Activated CD4-positive, alpha-beta memory T cell treated with anti-CD3 and anti-CD28 coated beads for 36 hours (primary cell): ENCODE measurements at regions of chr6 and their contacts with region 1.

Region 1: GRCh38 chr6:127516666-127517273 is 2.4 kb downstream of the MTCL3 start:
- DNase-seq: peak; percentile 72
- H3K4me3 Mint-ChIP-seq: peak overlapping the region; percentile 85
- H3K27ac Mint-ChIP-seq: peak overlapping the region; percentile 34
- H3K4me1 Mint-ChIP-seq: peaks cover 32% of the 10 kb centered on the region
- H3K27me3 Mint-ChIP-seq: peaks cover 15% of the 10 kb centered on the region

Region 2: GRCh38 chr6:127291495-127291894 is 225.3 kb before region 1 on chr6:
- CTCF ChIA-PET with region 1: interaction called, 9 read pairs
- POLR2A ChIA-PET with region 1: no interaction called
- intact Hi-C with region 1: loop called (anchors 2 kb)
- DNase-seq: no peak
- H3K4me3 Mint-ChIP-seq: no peak overlapping the region
- H3K27ac Mint-ChIP-seq: peak overlapping the region; percentile 49
- H3K4me1 Mint-ChIP-seq: peaks cover 45% of the 10 kb centered on the region
- H3K27me3 Mint-ChIP-seq: no peaks in the 10 kb centered on the region

Region 3: DNA sequence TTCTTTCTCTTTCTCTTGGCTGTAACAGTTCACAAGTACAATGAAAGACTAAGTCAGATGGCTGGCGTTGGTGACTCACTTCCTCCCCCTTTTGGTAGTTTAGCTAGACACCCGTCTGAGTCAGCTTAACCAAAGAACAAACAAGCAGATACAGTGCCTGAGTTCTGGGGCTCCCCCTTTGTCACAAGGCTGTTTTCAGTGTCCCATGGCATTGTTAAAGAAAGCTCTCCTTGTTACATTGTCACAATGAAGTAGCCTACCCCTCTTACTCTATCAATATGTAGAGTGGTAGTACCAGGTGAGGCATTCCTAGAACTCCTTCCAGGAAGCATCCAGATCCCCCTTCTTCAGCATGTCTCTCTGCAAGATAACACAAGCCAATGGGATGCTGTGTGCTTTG is 96.2 kb before region 1 on chr6:
- CTCF ChIA-PET with region 1: interaction called, 9 read pairs
- POLR2A ChIA-PET with region 1: interaction called, 3 read pairs
- intact Hi-C with region 1: loop called (anchors 1 kb)
- DNase-seq: peak; percentile 89
- H3K4me3 Mint-ChIP-seq: no peak overlapping the region
- H3K27ac Mint-ChIP-seq: peak overlapping the region; percentile 64
- H3K4me1 Mint-ChIP-seq: peaks cover 19% of the 10 kb centered on the region
- H3K27me3 Mint-ChIP-seq: peaks cover 1% of the 10 kb centered on the region

Region 4: GRCh38 chr6:127484212-127484858 is 32.4 kb before region 1 on chr6:
- CTCF ChIA-PET with region 1: interaction called, 163 read pairs
- POLR2A ChIA-PET with region 1: interaction called, 21 read pairs
- intact Hi-C with region 1: loop called (anchors 1 kb)
- DNase-seq: no peak
- H3K4me3 Mint-ChIP-seq: no peak overlapping the region
- H3K27ac Mint-ChIP-seq: peak overlapping the region; percentile 68
- H3K4me1 Mint-ChIP-seq: peaks cover 28% of the 10 kb centered on the region
- H3K27me3 Mint-ChIP-seq: no peaks in the 10 kb centered on the region

Region 5: GRCh38 chr6:127775371-127775770 is 258.6 kb after region 1 on chr6:
- CTCF ChIA-PET with region 1: no interaction called
- POLR2A ChIA-PET with region 1: no interaction called
- intact Hi-C with region 1: no loop called
- DNase-seq: no peak
- H3K4me3 Mint-ChIP-seq: no peak overlapping the region
- H3K27ac Mint-ChIP-seq: no peak overlapping the region
- H3K4me1 Mint-ChIP-seq: peaks cover 44% of the 10 kb centered on the region
- H3K27me3 Mint-ChIP-seq: no peaks in the 10 kb centered on the region

Region 6: GRCh38 chr6:127918506-127919427 is 402.0 kb after region 1 on chr6:
- CTCF ChIA-PET with region 1: no interaction called
- POLR2A ChIA-PET with region 1: no interaction called
- intact Hi-C with region 1: loop called (anchors 10 kb)
- DNase-seq: no peak
- H3K4me3 Mint-ChIP-seq: peak overlapping the region; percentile 49
- H3K27ac Mint-ChIP-seq: peak overlapping the region; percentile 44
- H3K4me1 Mint-ChIP-seq: peaks cover 85% of the 10 kb centered on the region
- H3K27me3 Mint-ChIP-seq: no peaks in the 10 kb centered on the region

Region 7: DNA sequence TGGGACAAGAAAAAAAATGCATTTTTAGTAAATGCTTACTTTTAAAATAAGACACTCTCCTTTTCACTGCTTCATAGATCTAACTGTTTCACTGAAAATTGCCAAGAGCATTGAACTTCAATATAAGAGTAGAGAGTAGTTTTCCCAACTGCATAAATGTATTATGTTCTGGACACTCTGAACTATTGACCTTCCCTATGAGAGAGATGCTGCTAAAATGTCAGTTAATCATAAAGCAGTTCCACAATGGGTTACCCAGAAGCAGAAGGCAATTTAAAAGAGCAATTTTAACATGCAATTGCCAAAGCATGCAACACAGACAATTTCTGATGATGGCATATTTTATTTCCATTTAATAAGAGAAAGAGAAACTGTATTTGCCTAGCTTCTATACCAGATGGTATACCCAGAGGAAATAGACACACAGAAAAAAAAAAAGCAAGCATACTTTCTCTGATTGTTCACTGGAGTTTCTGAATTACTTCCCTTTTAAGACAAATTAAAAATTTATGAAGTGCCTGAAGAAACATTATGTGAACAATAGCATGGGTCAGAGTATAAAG is 663.2 kb after region 1 on chr6:
- CTCF ChIA-PET with region 1: no interaction called
- POLR2A ChIA-PET with region 1: no interaction called
- intact Hi-C with region 1: no loop called
- DNase-seq: no peak
- H3K4me3 Mint-ChIP-seq: no peak overlapping the region
- H3K27ac Mint-ChIP-seq: no peak overlapping the region
- H3K4me1 Mint-ChIP-seq: no peaks in the 10 kb centered on the region
- H3K27me3 Mint-ChIP-seq: no peaks in the 10 kb centered on the region